HepG2 (cell line): ENCODE measurements at regions of chr20 and their contacts with region 1.

Region 1: GRCh38 chr20:17761604-17762003 is 61.8 kb downstream of the BANF2 start:
- DNase-seq: no peak
- ATAC-seq: peak; percentile 67
- H3K4me3 ChIP-seq: no peak overlapping the region
- H3K27ac ChIP-seq: no peak overlapping the region
- H3K4me1 ChIP-seq: peaks cover 31% of the 10 kb centered on the region
- H3K27me3 ChIP-seq: peaks cover 0 to 5% of the 10 kb centered on the region in 2 experiments; a peak in 1 of 5 replicates
- CTCF ChIP-seq: no peak
- EP300 ChIP-seq: no peak
- POLR2A ChIP-seq: no peak
- RAD21 ChIP-seq: no peak

Region 2: GRCh38 chr20:17806739-17807441 is 45.3 kb after region 1 on chr20:
- CTCF ChIA-PET with region 1: no interaction called
- POLR2A ChIA-PET with region 1: no interaction called
- in situ Hi-C with region 1: no loop called
- intact Hi-C with region 1: loop called (anchors 5 kb)
- DNase-seq: no peak
- ATAC-seq: peak; percentile 24
- H3K4me3 ChIP-seq: peak overlapping the region in 2 of 3 experiments; percentile 16 to 49; a peak in 1 of 6 replicates
- H3K27ac ChIP-seq: no peak overlapping the region
- H3K4me1 ChIP-seq: peaks cover 83% of the 10 kb centered on the region
- H3K27me3 ChIP-seq: peaks cover 0 to 1% of the 10 kb centered on the region in 2 experiments; a peak in 2 of 5 replicates
- CTCF ChIP-seq: peak; percentile 54
- EP300 ChIP-seq: no peak
- POLR2A ChIP-seq: no peak
- RAD21 ChIP-seq: no peak